Activated CD4-positive, alpha-beta memory T cell treated with anti-CD3 and anti-CD28 coated beads for 36 hours (primary cell): ENCODE measurements at regions of chr5 and their contacts with region 1.

Region 1: DNA sequence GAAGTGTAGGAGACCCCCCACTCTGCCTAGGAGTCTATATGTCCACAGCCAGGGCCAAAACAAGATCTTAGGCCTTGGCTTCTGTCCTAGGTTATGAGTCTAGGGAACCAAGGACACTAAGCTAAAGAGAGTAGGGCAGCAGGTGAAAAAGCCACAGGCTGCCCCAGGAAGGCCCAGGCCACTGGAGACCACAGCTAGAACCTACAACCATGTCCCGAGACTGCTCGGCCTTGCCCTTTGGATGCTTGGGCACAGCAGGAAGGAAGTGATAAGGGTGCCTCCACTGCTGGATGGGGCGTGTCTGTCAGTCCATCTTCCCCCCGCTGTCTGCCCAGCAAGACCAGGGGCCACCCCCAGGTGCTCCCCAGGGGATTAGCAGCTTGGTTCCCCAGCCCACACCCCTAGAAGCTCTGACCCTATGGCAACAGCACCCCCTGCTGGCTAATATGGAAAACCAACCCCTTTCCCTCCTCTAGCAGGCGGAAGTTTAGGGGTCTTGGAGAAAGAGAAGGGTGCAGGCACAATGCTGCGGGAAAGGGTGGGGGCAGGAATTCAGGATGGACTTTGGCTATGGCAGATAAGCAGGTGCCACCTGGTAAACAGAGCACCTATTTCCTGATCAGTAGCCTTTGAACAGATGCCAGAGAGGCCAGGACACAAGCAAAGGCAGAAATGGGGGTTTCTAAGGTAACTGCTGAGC is 10.5 kb upstream of the IRF1 start:
- DNase-seq: peak; percentile 83
- H3K4me3 Mint-ChIP-seq: no peak overlapping the region
- H3K27ac Mint-ChIP-seq: peak overlapping the region; percentile 43
- H3K4me1 Mint-ChIP-seq: peaks cover 20% of the 10 kb centered on the region
- H3K27me3 Mint-ChIP-seq: peaks cover 3% of the 10 kb centered on the region

Region 2: DNA sequence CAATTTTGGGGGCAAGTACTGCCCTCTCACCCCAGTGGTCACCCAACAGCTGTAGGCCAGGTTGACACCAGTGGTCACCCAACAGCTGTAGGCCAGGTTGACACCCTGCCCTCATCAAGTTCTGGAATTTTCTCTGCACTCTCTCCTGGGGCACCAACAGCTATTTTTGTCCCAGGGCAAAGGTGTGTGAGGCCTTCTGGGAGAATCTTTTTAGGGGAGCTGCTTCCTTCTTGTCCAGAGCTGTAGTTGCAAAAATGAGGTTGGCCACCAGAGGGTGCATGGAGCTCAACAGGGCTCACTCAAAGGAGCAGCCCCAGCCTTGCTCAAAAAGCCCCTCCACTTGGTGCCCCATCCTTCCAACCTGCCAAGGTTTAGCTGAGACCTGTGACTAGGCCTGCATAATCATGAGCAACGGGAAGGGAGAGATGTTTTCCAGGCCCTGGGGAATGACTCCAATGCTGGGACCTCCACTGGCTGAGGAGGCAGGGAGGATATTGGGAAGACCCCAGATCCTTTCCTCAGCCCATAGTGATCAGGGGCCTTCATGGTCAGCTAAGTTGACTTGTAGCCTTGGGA is 262.8 kb before region 1 on chr5:
- CTCF ChIA-PET with region 1: interaction called, 28 read pairs
- POLR2A ChIA-PET with region 1: no interaction called
- intact Hi-C with region 1: loop called (anchors 2 kb)
- DNase-seq: peak; percentile 83
- H3K4me3 Mint-ChIP-seq: no peak overlapping the region
- H3K27ac Mint-ChIP-seq: no peak overlapping the region
- H3K4me1 Mint-ChIP-seq: no peaks in the 10 kb centered on the region
- H3K27me3 Mint-ChIP-seq: peaks cover 3% of the 10 kb centered on the region

Region 3: GRCh38 chr5:132369474-132370180 is 131.5 kb before region 1 on chr5 and contains the start of gene SLC22A5:
- CTCF ChIA-PET with region 1: interaction called, 10 read pairs
- POLR2A ChIA-PET with region 1: no interaction called
- intact Hi-C with region 1: no loop called
- DNase-seq: peak; percentile 79
- H3K4me3 Mint-ChIP-seq: peak within 1 kb of the TSS; percentile 76
- H3K27ac Mint-ChIP-seq: peak within 1 kb of the TSS; percentile 42
- H3K4me1 Mint-ChIP-seq: peaks cover 24% of the 10 kb centered on the region
- H3K27me3 Mint-ChIP-seq: no peaks in the 10 kb centered on the region
- total RNA-seq, gene SLC22A5: 2.8 to 3.6 TPM

Region 4: GRCh38 chr5:132410451-132411381 is 90.4 kb before region 1 on chr5:
- CTCF ChIA-PET with region 1: interaction called, 31 read pairs
- POLR2A ChIA-PET with region 1: interaction called, 47 read pairs
- intact Hi-C with region 1: loop called (anchors 1 kb)
- DNase-seq: peak; percentile 90
- H3K4me3 Mint-ChIP-seq: peak overlapping the region; percentile 93
- H3K27ac Mint-ChIP-seq: peak overlapping the region; percentile 96
- H3K4me1 Mint-ChIP-seq: peaks cover 65% of the 10 kb centered on the region
- H3K27me3 Mint-ChIP-seq: no peaks in the 10 kb centered on the region

Region 5: GRCh38 chr5:132426525-132427138 is 74.4 kb before region 1 on chr5:
- CTCF ChIA-PET with region 1: interaction called, 30 read pairs
- POLR2A ChIA-PET with region 1: interaction called, 70 read pairs
- intact Hi-C with region 1: loop called (anchors 1 kb)
- DNase-seq: peak; percentile 91
- H3K4me3 Mint-ChIP-seq: peak overlapping the region; percentile 65
- H3K27ac Mint-ChIP-seq: peak overlapping the region; percentile 98
- H3K4me1 Mint-ChIP-seq: peaks cover 96% of the 10 kb centered on the region
- H3K27me3 Mint-ChIP-seq: no peaks in the 10 kb centered on the region

Region 6: DNA sequence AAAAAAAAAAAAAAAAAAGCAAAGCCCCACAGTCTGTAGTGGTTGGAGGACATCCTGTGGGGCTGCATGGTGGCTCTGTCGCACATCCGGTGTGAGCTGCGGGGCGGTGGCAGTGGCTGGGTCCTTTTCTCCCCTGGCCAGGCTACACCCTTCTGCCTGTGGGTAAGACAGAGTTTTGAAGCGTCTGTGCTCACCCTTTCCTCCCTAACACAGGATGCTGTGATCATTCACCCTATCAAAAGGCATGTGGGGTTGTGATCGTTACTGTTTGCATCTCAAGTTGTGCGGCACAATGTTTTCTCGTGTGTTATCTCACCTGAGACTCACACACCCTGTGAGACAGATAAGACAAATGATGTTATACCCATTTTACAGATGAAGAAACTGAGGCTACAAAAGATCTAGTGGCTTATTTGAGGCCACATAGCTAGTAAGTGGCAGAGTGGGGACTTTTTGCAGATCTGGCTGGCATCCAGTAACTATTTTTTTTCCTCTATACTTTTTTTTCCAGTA is 28.0 kb before region 1 on chr5:
- CTCF ChIA-PET with region 1: interaction called, 12 read pairs
- POLR2A ChIA-PET with region 1: interaction called, 37 read pairs
- intact Hi-C with region 1: loop called (anchors 1 kb)
- DNase-seq: peak; percentile 90
- H3K4me3 Mint-ChIP-seq: peak overlapping the region; percentile 7
- H3K27ac Mint-ChIP-seq: peak overlapping the region; percentile 91
- H3K4me1 Mint-ChIP-seq: peaks cover 75% of the 10 kb centered on the region
- H3K27me3 Mint-ChIP-seq: no peaks in the 10 kb centered on the region

Region 7: DNA sequence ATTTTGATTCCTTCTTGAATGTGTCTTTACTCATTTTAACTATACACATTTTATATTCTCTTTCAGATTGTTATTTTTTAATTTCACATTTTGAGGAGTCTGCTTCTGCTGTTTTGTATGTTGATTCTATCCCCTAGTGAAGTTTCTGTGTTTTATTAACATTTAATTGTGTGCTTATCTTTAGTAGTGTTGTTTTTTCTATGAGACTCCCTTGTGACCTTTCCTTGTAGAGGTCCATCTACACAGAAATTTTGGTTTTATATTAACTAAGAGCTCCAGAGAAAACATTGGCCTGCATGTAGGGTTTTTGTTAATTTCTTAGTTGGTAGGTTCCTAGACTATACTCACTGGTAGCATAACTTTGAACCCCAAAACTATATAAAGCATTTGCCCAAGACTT is 121.5 kb after region 1 on chr5:
- CTCF ChIA-PET with region 1: no interaction called
- POLR2A ChIA-PET with region 1: no interaction called
- intact Hi-C with region 1: no loop called
- DNase-seq: no peak
- H3K4me3 Mint-ChIP-seq: no peak overlapping the region
- H3K27ac Mint-ChIP-seq: no peak overlapping the region
- H3K4me1 Mint-ChIP-seq: peaks cover 13% of the 10 kb centered on the region
- H3K27me3 Mint-ChIP-seq: no peaks in the 10 kb centered on the region